ENCODE measurements at regions of chr2 and their contacts with region 1.

Region 1: GRCh38 chr2:172465417-172466334 is 38.3 kb downstream of the ITGA6 start:
- DNase-seq: peak; percentile 29 to 59
- ATAC-seq: peak; percentile 74 to 89 (median 82)
- H3K4me3 ChIP-seq: peak overlapping the region; percentile 22
- H3K27ac ChIP-seq: no peak overlapping the region
- H3K4me1 ChIP-seq: peaks cover 4% of the 10 kb centered on the region
- H3K27me3 ChIP-seq: no peaks in the 10 kb centered on the region
- CTCF ChIP-seq: peak; percentile 89

Region 2: GRCh38 chr2:172172513-172173173 is 293.0 kb before region 1 on chr2:
- intact Hi-C with region 1: loop called (anchors 1 to 2 kb)
- DNase-seq: peak; percentile 63 to 78
- ATAC-seq: peak; percentile 99 to 100 (median 99)
- H3K4me3 ChIP-seq: peak overlapping the region; percentile 75
- H3K27ac ChIP-seq: no peak overlapping the region
- H3K4me1 ChIP-seq: no peaks in the 10 kb centered on the region
- H3K27me3 ChIP-seq: peaks cover 0 to 4% (median 0%) of the 10 kb centered on the region in 3 donors
- CTCF ChIP-seq: peak; percentile 80

Region 3: GRCh38 chr2:172285010-172285621 is 180.6 kb before region 1 on chr2:
- intact Hi-C with region 1: loop called in 1 of 2 experiments (anchors 5 kb)
- DNase-seq: no peak
- ATAC-seq: peak; percentile 52 to 70 (median 56)
- H3K4me3 ChIP-seq: no peak overlapping the region
- H3K27ac ChIP-seq: peak overlapping the region; percentile 72
- H3K4me1 ChIP-seq: peaks cover 26% of the 10 kb centered on the region
- H3K27me3 ChIP-seq: no peaks in the 10 kb centered on the region
- CTCF ChIP-seq: no peak

Region 4: GRCh38 chr2:172350839-172351479 is 114.7 kb before region 1 on chr2:
- intact Hi-C with region 1: loop called in 1 of 2 experiments (anchors 10 kb)
- DNase-seq: peak; percentile 70 to 90
- ATAC-seq: peak; percentile 98 to 100 (median 99)
- H3K4me3 ChIP-seq: no peak overlapping the region
- H3K27ac ChIP-seq: peak overlapping the region; percentile 75
- H3K4me1 ChIP-seq: peaks cover 8% of the 10 kb centered on the region
- H3K27me3 ChIP-seq: no peaks in the 10 kb centered on the region
- CTCF ChIP-seq: no peak

Region 5: DNA sequence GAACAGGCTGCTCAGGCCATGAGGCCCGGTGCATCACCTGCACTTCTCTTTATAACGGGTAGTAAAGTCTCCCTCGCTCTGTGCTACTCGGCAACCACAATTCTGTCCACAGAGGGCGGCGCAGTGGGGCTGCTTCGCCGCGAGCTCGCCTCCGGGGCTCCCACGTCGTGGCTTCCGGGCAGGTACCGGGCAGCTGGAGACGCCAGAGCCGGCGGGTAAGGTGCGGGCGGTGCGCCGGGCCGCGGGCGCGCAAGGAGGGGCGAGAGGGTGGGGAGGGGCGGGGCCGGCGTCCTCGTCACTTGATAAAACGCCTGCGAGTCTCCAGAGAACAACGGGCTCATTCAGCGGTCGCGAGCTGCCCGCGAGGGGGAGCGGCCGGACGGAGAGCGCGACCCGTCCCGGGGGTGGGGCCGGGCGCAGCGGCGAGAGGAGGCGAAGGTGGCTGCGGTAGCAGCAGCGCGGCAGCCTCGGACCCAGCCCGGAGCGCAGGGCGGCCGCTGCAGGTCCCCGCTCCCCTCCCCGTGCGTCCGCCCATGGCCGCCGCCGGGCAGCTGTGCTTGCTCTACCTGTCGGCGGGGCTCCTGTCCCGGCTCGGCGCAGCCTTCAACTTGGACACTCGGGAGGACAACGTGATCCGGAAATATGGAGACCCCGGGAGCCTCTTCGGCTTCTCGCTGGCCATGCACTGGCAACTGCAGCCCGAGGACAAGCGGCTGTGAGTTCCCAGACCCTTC is 38.3 kb before region 1 on chr2 and contains the start of gene ITGA6:
- intact Hi-C with region 1: loop called (anchors 2 to 5 kb)
- DNase-seq: peak; percentile 69 to 78
- ATAC-seq: peak; percentile 76 to 85 (median 82)
- H3K4me3 ChIP-seq: peak within 1 kb of the TSS; percentile 94
- H3K27ac ChIP-seq: peak within 1 kb of the TSS; percentile 86
- H3K4me1 ChIP-seq: peaks cover 26% of the 10 kb centered on the region
- H3K27me3 ChIP-seq: no peaks in the 10 kb centered on the region
- CTCF ChIP-seq: peak; percentile 23
- total RNA-seq, gene ITGA6: 25.9 to 46.5 (median 43.8) TPM

Measured in psoas muscle (tissue), 8 donors.